Psoas muscle (tissue), 8 donors: ENCODE measurements at regions of chr18 and their contacts with region 1.

Region 1: GRCh38 chr18:4720518-4720917 is 265.4 kb upstream of the DLGAP1 start:
- DNase-seq: no peak
- ATAC-seq: no peak
- H3K4me3 ChIP-seq: no peak overlapping the region
- H3K27ac ChIP-seq: no peak overlapping the region
- H3K4me1 ChIP-seq: no peaks in the 10 kb centered on the region
- H3K27me3 ChIP-seq: no peaks in the 10 kb centered on the region
- CTCF ChIP-seq: no peak

Region 2: DNA sequence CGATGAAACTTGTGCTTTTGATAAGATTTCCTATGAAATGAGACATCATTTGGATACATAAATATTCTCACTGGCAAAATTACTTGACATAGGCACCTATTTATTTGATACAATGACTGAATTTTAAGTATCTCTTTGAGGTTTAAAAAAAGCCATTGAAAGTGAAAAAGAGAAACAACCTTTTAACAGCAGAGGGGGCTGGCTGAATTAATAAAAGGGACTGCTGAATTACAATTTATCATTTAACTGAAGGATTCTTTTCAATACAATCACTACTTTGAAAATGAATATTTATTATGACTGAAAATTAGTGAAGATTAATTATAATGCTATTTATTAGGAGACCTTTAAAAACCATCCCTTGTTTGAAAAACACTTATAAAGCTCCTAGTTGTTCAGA is 600.7 kb before region 1 on chr18:
- intact Hi-C with region 1: loop called in 1 of 2 experiments (anchors 10 kb)
- DNase-seq: no peak
- ATAC-seq: no peak
- H3K4me3 ChIP-seq: no peak overlapping the region
- H3K27ac ChIP-seq: no peak overlapping the region
- H3K4me1 ChIP-seq: no peaks in the 10 kb centered on the region
- H3K27me3 ChIP-seq: no peaks in the 10 kb centered on the region
- CTCF ChIP-seq: no peak